Heart right ventricle (tissue), 16 donors: ENCODE measurements at regions of chr21 and their contacts with region 1.

Region 1: DNA sequence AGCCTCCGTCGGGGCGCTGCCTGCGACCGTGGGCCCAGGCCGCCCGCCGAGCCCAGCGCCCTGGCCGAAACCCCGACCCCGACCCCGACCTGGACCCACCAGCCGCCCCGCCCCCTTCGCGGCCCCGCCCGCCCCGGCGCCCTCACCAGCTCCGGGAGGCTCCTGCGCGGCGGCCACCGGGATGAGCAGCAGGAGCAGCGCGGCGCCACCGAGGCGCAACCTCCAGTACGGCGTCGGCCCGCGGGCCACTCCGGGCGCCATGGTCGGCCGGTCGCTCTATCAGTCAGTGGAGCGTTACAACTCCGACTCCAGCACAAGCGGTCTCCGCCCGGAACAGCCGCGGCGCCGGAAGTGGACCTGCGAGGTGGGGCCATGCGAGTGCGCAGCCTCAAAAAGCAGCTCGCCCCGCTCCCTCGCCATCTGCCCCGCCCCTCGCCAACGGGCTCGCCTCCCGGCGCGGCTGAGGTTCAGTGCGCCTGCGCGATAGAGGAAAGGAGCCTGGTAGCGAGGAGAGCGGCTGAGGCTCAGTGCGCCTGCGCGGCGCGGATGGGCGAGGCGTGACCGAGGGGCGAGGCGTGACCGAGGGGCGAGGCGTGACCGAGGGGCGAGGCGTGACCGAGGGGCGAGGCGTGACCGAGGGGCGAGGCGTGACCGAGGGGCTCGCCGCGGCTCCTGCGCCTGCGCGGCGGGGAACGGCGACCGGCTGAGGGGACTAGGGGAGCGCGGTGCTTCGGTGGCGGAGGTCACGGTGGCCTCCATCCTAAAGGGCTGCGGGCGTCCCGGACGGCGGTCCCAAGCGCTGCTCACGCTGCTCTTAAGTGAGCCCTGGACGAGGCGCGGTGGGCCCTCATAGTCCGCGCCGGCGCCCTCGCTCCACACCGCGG is at the start of gene PTTG1IP:
- DNase-seq: peak; percentile 98 to 100
- ATAC-seq: peak; percentile 82 to 90 (median 87)
- H3K4me3 ChIP-seq: peak within 1 kb of the TSS; percentile 64 to 95 (median 85)
- H3K27ac ChIP-seq: peak within 1 kb of the TSS; percentile 83 to 99 (median 95)
- H3K4me1 ChIP-seq: peaks cover 12 to 88% (median 52%) of the 10 kb centered on the region in 9 donors
- H3K27me3 ChIP-seq: no peaks in the 10 kb centered on the region
- CTCF ChIP-seq: no peak
- total RNA-seq, gene PTTG1IP: 109 to 188 (median 148) TPM

Region 2: DNA sequence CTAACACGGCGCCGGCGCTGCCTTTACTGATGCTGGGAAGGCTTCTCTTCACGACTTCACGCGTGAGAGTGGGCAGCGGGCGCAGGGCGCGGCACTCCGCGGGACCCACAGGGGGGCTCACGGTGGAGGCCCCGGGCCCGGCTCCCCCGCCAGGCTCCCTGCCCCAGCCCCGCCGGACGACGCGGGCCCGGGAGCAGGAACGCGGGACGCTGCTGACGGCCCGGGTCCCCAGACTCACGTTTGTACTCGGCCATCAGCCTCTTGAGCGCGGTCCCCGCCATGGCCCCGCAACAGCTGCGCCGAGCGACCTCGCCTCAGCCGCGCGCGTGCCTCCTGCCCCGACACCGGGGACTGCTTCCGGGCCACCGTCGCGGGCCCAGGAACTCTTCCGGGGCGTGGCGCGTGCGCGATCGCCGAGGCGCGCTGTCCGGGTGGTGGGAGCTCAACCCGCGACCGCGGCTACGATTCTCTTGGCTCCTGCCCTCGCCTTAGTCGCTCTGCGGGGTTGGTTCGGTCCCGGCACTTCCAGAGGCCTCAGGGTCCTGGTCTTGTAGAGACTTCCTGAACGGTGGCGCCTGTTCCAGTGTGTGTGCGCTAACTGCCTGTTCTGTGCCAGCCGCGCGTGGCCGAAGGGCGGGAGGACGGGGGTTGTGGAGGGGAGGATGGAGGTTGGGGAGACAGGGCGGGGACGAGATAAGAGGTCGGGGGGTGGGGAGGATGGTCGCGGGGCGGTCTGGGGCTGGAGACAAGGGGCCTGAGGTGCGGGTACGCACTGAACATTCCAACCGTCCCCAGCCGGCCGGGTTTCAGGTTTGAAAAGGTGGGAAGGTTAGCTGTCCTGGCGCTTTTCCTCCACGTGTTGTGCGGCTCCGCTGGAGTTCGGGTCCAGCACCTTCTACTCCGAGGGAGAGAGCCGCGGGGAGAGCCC is 71.9 kb before region 1 on chr21 and contains the start of gene UBE2G2:
- intact Hi-C with region 1: loop called in 7 of 10 experiments (anchors 2 to 5 kb)
- DNase-seq: peak; percentile 77 to 87
- ATAC-seq: peak; percentile 96 to 98 (median 97)
- H3K4me3 ChIP-seq: peak within 1 kb of the TSS; percentile 69 to 98 (median 85)
- H3K27ac ChIP-seq: peak within 1 kb of the TSS in 9 of 10 donors; percentile 61 to 86 (median 79)
- H3K4me1 ChIP-seq: peaks cover 3 to 46% (median 30%) of the 10 kb centered on the region in 9 donors
- H3K27me3 ChIP-seq: no peaks in the 10 kb centered on the region
- CTCF ChIP-seq: no peak
- total RNA-seq, gene UBE2G2: 58.1 to 89.5 (median 67.0) TPM

Region 3: GRCh38 chr21:44817506-44817880 is 56.1 kb before region 1 on chr21:
- intact Hi-C with region 1: loop called in 6 of 10 experiments (anchors 2 to 5 kb)
- DNase-seq: peak; percentile 92 to 96
- ATAC-seq: peak; percentile 91 to 97 (median 95)
- H3K4me3 ChIP-seq: peak overlapping the region; percentile 52 to 97 (median 82)
- H3K27ac ChIP-seq: peak overlapping the region; percentile 37 to 99 (median 96)
- H3K4me1 ChIP-seq: peaks cover 9 to 44% (median 25%) of the 10 kb centered on the region in 9 donors
- H3K27me3 ChIP-seq: no peaks in the 10 kb centered on the region
- CTCF ChIP-seq: peak in 1 of 9 donors; percentile 13

Region 4: GRCh38 chr21:44845399-44846223 is 28.0 kb before region 1 on chr21:
- intact Hi-C with region 1: loop called in 1 of 10 experiments (anchors 2 kb)
- DNase-seq: peak; percentile 67 to 81
- ATAC-seq: peak; percentile 72 to 87 (median 80)
- H3K4me3 ChIP-seq: peak overlapping the region in 9 of 10 donors; percentile 5 to 52 (median 45)
- H3K27ac ChIP-seq: peak overlapping the region in 7 of 10 donors; percentile 4 to 71 (median 55)
- H3K4me1 ChIP-seq: peaks cover 15 to 46% (median 26%) of the 10 kb centered on the region in 9 donors
- H3K27me3 ChIP-seq: no peaks in the 10 kb centered on the region
- CTCF ChIP-seq: peak in 5 of 9 donors; percentile 36 to 57 (median 52)

Region 5: DNA sequence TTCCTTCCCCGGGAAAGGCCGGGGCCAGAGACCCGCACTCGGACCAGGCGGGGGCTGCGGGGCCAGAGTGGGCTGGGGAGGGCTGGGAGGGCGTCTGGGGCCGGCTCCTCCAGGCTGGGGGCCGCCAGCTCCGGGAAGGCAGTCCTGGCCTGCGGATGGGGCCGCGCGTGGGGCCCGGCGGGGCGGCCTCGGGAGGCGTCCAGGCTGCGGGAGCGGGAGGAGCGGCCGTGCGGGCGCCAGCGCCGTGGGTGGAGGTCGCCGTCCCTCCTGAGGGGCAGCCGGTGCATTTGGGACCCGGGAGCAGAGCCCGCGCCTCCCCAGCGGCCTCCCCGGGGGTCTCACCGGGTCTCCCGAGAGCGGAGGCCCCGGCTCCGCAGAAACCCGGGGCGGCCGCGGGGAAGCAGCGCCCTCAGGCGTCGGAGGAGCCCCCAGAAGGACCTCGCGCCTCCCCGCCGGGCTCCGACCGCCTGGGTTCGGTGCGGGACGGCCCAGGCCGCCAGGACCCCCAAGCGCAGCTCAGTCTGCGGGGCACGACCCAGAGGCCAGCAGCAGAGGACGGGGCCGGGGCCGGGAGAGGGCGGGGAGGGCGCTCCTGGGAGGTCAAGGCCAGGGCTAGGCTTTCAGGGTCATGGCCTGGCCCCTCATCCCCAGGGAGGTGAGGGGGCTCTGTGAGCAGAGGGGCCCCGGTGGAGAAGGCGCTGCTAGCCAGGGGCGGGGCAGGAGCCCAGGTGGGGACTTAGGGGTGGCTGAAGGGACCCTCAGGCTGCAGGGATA is 59.0 kb after region 1 on chr21:
- intact Hi-C with region 1: loop called in 1 of 10 experiments (anchors 5 kb)
- DNase-seq: peak in 1 of 2 donors; percentile 65
- ATAC-seq: peak; percentile 34 to 72 (median 54)
- H3K4me3 ChIP-seq: peak overlapping the region; percentile 23 to 60 (median 46)
- H3K27ac ChIP-seq: peak overlapping the region in 3 of 10 donors; percentile 15 to 96 (median 26)
- H3K4me1 ChIP-seq: peaks cover 12 to 55% (median 25%) of the 10 kb centered on the region in 9 donors
- H3K27me3 ChIP-seq: peaks cover 13 to 71% (median 40%) of the 10 kb centered on the region in 7 donors
- CTCF ChIP-seq: peak; percentile 36 to 76 (median 62)

Region 6: GRCh38 chr21:45109831-45110492 is 236.4 kb after region 1 on chr21:
- intact Hi-C with region 1: loop called in 1 of 10 experiments (anchors 10 kb)
- DNase-seq: no peak
- ATAC-seq: peak in 7 of 8 donors; percentile 9 to 78 (median 52)
- H3K4me3 ChIP-seq: peak overlapping the region in 6 of 10 donors; percentile 11 to 38 (median 20)
- H3K27ac ChIP-seq: peak overlapping the region in 9 of 10 donors; percentile 35 to 84 (median 72)
- H3K4me1 ChIP-seq: peaks cover 14 to 96% (median 72%) of the 10 kb centered on the region in 9 donors
- H3K27me3 ChIP-seq: no peaks in the 10 kb centered on the region
- CTCF ChIP-seq: no peak